ENCODE measurements at regions of chr1 and their contacts with region 1.

Region 1: GRCh38 chr1:201408176-201408833 is 9.2 kb upstream of the LAD1 start:
- DNase-seq: peak; percentile 99
- ATAC-seq: peak; percentile 89
- H3K4me3 ChIP-seq: no peak overlapping the region
- H3K27ac ChIP-seq: no peak overlapping the region
- H3K4me1 ChIP-seq: peaks cover 10% of the 10 kb centered on the region; the same call in 1 of the 2 replicates
- H3K27me3 ChIP-seq: no peaks in the 10 kb centered on the region
- CTCF ChIP-seq: peak; percentile 100

Region 2: GRCh38 chr1:201385299-201385891 is 22.9 kb before region 1 on chr1:
- CTCF ChIA-PET with region 1: interaction called, 9 read pairs
- POLR2A ChIA-PET with region 1: no interaction called
- intact Hi-C with region 1: loop called (anchors 1 kb)
- DNase-seq: peak; percentile 99
- ATAC-seq: peak; percentile 74
- H3K4me3 ChIP-seq: no peak overlapping the region
- H3K27ac ChIP-seq: no peak overlapping the region
- H3K4me1 ChIP-seq: peaks cover 27% of the 10 kb centered on the region
- H3K27me3 ChIP-seq: no peaks in the 10 kb centered on the region
- CTCF ChIP-seq: peak; percentile 100

Region 3: GRCh38 chr1:201421041-201421440 is 12.7 kb after region 1 on chr1:
- CTCF ChIA-PET with region 1: no interaction called
- POLR2A ChIA-PET with region 1: interaction called, 11 read pairs
- intact Hi-C with region 1: no loop called
- DNase-seq: no peak
- ATAC-seq: no peak
- H3K4me3 ChIP-seq: no peak overlapping the region
- H3K27ac ChIP-seq: no peak overlapping the region
- H3K4me1 ChIP-seq: no peaks in the 10 kb centered on the region
- H3K27me3 ChIP-seq: no peaks in the 10 kb centered on the region
- CTCF ChIP-seq: no peak

Region 4: GRCh38 chr1:201495471-201496295 is 87.4 kb after region 1 on chr1:
- CTCF ChIA-PET with region 1: no interaction called
- POLR2A ChIA-PET with region 1: no interaction called
- intact Hi-C with region 1: no loop called
- DNase-seq: no peak
- ATAC-seq: no peak
- H3K4me3 ChIP-seq: no peak overlapping the region
- H3K27ac ChIP-seq: no peak overlapping the region
- H3K4me1 ChIP-seq: peaks cover 3% of the 10 kb centered on the region
- H3K27me3 ChIP-seq: no peaks in the 10 kb centered on the region
- CTCF ChIP-seq: no peak